ENCODE measurements at regions of chr3 and their contacts with region 1.

Region 1: GRCh38 chr3:25427942-25428788 is at the start of gene RARB:
- DNase-seq: peak; percentile 94
- H3K4me3 ChIP-seq: peak within 1 kb of the TSS; percentile 62 to 74 (median 68)
- H3K27ac ChIP-seq: peak within 1 kb of the TSS; percentile 86 to 94 (median 92)
- H3K4me1 ChIP-seq: peaks cover 9 to 55% (median 45%) of the 10 kb centered on the region in 4 donors
- H3K27me3 ChIP-seq: no peaks in the 10 kb centered on the region
- CTCF ChIP-seq: no peak
- EP300 ChIP-seq: no peak
- POLR2A ChIP-seq: peak; percentile 92
- total RNA-seq, gene RARB: 29.2 to 51.9 (median 40.9) TPM

Region 2: DNA sequence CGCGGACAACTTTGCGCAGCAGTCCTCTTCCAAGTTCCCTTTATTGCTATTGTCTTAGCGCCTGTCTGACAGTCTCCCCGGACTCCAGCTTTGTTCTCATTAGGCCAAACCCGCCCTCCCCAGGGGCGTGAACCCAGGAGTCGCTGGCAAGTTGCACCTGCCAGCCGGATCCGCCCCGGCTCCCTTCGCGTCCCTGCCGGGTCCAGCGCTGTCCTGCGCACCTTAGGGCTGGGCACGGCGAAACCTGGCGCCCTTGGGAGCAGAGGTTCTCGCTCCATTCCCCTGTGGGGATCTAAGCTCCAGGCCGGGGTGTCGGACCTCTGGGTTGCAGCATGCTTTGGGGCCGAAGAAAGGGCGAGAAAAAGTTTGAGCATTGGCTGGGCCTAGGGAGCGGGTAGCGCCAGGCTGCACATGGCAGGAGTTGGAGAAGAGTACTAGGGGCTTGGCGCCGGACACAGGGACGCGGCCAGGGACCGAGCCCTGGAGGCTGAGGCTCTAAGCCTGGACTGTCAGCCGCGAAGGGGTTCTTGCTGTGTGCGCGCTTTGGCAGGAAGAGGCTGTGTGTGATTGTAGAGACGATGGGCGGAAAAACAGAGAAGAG is 598.4 kb before region 1 on chr3:
- intact Hi-C with region 1: loop called (anchors 5 kb)
- DNase-seq: no peak
- H3K4me3 ChIP-seq: peak overlapping the region; percentile 68 to 84 (median 73)
- H3K27ac ChIP-seq: peak overlapping the region; percentile 77 to 82 (median 78)
- H3K4me1 ChIP-seq: peaks cover 14 to 42% (median 19%) of the 10 kb centered on the region in 4 donors
- H3K27me3 ChIP-seq: no peaks in the 10 kb centered on the region
- CTCF ChIP-seq: no peak
- EP300 ChIP-seq: no peak
- POLR2A ChIP-seq: no peak

Region 3: DNA sequence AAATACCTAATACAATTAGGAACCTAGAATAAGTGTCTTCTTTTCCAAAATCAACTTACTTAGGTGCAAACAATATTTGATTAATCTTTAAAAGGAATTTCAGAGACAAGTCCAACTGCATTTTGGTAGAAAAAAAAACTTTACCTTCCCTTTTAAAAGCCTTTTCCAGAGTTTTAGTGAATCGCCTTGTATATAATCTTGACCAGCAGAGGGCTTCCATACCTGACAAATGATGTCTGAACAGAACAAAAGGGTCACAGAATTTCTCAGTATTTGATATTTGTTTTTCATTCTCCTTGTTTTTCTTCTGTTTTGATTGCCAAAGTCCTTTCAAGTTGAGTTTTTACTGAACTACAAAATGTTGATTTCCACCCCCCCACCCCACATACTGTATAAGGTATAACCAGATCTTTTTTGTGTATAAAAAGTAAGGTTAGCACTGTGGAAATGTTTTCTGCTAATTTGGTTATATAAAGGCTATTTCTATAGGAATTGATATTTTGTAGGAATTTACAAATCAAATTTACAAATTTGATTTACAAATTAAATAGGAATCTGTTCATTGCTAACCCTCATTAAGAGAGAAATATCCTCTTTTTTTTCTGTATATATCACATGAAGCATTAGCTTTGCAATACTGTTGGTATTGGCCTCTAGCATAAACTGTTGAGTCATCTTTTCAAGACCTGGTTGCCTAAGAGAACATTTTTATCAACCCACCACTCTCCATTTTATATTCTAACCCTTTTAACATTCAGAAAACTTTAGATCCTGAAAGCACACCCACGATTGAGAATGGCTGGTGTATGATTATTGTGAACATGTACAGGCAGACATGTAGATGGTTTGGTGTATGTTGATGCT is 464.2 kb before region 1 on chr3:
- intact Hi-C with region 1: loop called (anchors 10 kb)
- DNase-seq: no peak
- H3K4me3 ChIP-seq: no peak overlapping the region
- H3K27ac ChIP-seq: no peak overlapping the region
- H3K4me1 ChIP-seq: peaks cover 0 to 28% (median 8%) of the 10 kb centered on the region in 4 donors
- H3K27me3 ChIP-seq: no peaks in the 10 kb centered on the region
- CTCF ChIP-seq: peak; percentile 38 to 64 (median 50)
- EP300 ChIP-seq: no peak
- POLR2A ChIP-seq: no peak

Region 4: DNA sequence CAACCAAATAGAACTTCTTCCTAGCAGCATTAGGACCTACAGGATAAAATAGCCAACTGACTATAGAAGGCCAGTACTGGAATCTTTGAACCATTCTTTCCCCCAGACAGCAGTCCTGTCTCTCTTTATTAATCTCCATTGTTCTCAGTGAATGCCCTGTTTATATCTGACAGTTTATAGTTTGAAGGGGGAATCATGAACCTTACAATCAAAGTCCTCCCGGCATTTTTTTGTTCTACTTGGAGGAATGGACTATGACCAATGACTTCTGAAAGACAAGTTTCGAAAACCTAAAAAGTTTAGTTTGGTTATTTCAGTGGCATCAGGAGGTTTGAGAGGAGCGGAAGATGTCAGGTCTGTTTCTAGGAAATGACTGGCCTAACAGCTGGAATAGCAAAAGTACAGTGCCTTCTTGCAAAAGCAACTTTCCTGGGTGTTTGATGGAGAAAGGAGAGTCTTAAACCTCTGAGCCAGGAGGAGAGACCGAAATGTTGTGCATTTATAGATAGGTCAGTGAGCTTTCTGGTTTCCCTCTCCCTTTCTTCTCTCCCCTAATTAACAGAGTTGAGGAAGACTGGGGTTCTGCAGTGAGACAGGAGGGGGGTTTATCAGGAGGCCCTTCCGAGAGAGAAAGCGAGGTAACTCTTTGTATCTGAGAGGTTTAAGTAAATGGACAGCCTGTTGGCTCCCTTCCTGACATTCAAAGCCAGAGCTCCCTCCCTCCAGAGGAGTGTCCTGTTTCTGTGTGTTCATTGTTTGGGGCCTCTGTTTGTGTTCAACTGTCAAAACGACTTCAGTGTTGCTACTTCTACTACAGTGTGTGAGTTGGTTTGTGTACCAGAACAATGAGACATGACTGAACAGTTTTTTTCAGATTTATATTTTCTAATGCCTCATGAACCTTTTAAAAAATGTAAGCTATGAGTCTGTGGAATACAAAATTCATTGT is 383.1 kb before region 1 on chr3:
- intact Hi-C with region 1: loop called (anchors 10 kb)
- DNase-seq: no peak
- H3K4me3 ChIP-seq: peak overlapping the region in 1 of 4 donors; percentile 13
- H3K27ac ChIP-seq: peak overlapping the region; percentile 43 to 75 (median 69)
- H3K4me1 ChIP-seq: peaks cover 33 to 62% (median 58%) of the 10 kb centered on the region in 4 donors
- H3K27me3 ChIP-seq: no peaks in the 10 kb centered on the region
- CTCF ChIP-seq: no peak
- EP300 ChIP-seq: no peak
- POLR2A ChIP-seq: no peak

Region 5: DNA sequence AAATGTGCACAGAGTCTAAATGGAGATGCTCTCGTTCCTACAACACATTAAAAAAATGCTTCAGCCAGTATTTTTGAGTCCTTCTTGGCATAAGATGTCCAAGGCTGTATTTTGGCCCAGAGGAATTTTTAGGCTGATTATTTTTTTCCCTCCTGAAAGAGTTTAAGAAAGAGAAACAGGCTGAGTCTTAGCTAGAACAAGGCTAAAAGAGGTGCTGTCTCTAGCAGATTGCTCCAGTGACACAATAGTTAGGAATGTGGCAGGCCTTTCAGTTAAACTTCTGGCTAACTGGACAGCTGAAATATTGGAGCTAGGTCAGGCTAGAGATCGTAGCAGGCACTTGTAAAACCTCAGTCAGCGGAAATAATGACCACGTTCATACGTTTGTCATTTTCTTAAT is 271.5 kb before region 1 on chr3:
- intact Hi-C with region 1: loop called (anchors 5 kb)
- DNase-seq: no peak
- H3K4me3 ChIP-seq: peak overlapping the region in 2 of 4 donors; percentile 20 to 31
- H3K27ac ChIP-seq: peak overlapping the region; percentile 48 to 78 (median 66)
- H3K4me1 ChIP-seq: peaks cover 6 to 51% (median 38%) of the 10 kb centered on the region in 4 donors
- H3K27me3 ChIP-seq: no peaks in the 10 kb centered on the region
- CTCF ChIP-seq: no peak
- EP300 ChIP-seq: no peak
- POLR2A ChIP-seq: no peak

Region 6: DNA sequence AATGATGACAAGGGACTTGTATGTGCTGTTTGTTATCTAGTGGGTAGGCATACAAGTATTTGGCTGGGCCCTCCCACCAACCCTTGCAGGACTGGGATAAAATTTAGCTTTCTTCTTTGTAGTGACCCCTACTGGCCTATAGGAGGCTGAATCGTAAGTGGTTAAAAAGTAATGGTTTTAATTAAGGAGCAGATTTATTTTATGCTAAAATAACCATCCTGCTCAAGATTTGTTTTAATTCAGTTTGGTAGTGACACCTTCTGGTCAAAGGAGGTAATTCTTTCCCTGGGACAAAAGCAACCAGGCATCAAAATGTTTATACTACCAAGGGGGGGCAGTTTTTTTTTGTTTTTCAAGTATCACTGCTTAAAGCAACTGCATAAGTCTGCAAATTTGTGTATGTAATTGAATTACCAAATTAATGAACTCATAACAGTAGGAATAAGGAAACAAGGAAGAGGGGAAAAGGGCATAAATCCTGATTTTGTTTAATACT is 165.9 kb after region 1 on chr3:
- intact Hi-C with region 1: loop called (anchors 5 kb)
- DNase-seq: no peak
- H3K4me3 ChIP-seq: no peak overlapping the region
- H3K27ac ChIP-seq: peak overlapping the region; percentile 68 to 71 (median 69)
- H3K4me1 ChIP-seq: peaks cover 28 to 84% (median 76%) of the 10 kb centered on the region in 4 donors
- H3K27me3 ChIP-seq: no peaks in the 10 kb centered on the region
- CTCF ChIP-seq: peak; percentile 82 to 91 (median 87)
- EP300 ChIP-seq: no peak
- POLR2A ChIP-seq: no peak

Measured in esophagus muscularis mucosa (tissue), 4 donors.